ENCODE measurements at regions of chr4 and their contacts with region 1.

Region 1: DNA sequence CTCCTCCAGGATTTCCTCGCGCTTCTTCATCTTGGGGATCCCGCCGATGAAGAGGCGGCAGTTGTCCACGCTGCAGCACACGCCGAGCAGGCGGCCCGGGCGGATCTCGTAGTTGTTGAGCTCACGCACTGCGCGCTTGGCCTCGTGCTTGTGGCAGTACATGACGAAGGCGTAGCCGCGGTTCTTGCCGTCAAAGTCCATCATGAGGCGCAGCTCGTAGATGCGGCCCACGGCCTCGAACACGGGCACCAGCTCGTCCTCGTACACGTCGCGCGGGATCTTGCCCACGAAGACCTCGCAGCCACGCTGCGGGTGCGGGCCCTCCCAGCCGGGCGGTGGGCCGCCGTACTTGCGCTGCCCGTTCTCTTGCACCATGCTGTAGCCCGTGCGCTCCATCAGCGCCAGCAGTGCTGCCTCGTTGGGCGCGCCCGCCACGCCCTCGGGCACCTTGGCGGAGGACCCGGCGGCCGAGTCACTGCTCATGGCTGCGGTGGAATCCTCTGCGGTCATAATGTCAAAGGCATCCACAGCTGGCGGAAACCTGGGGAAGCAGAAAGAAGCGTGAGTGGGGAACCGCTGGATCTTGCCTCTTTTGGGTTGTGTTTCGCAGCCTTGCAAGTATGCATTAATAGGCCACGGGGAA is 103.4 kb downstream of the CHRNA9 start:
- DNase-seq: no peak
- H3K4me3 Mint-ChIP-seq: no peak overlapping the region
- H3K27ac Mint-ChIP-seq: no peak overlapping the region
- H3K4me1 Mint-ChIP-seq: peaks cover 15% of the 10 kb centered on the region
- H3K27me3 Mint-ChIP-seq: peaks cover 1% of the 10 kb centered on the region

Region 2: GRCh38 chr4:40275065-40275730 is 163.3 kb before region 1 on chr4:
- CTCF ChIA-PET with region 1: no interaction called
- POLR2A ChIA-PET with region 1: no interaction called
- intact Hi-C with region 1: no loop called
- DNase-seq: no peak
- H3K4me3 Mint-ChIP-seq: no peak overlapping the region
- H3K27ac Mint-ChIP-seq: no peak overlapping the region
- H3K4me1 Mint-ChIP-seq: peaks cover 10% of the 10 kb centered on the region
- H3K27me3 Mint-ChIP-seq: no peaks in the 10 kb centered on the region

Region 3: DNA sequence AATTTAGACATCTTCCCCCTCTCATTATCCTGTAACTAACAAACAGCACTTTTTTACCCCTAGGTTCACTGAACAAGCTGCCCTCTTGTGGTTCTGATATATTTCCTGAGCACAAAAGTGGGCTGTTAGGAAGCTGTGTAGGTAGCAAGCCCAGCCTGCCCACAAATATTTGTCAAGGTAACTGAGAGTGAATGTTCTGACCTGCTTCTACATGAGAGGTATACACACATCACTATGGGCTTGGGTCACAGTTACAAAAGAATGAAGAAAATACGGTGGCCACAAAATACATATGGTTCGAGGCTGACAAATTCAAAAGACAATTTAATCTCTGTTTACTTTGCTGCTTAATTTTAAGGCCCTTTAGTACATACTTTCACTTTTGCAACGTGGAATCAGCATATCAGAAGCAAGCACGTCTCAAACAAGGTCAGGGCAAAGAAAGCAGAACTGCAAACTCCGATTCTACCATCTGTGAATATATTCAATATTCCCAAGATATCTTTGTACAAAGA is 112.5 kb after region 1 on chr4:
- CTCF ChIA-PET with region 1: no interaction called
- POLR2A ChIA-PET with region 1: no interaction called
- intact Hi-C with region 1: loop called (anchors 10 kb)
- DNase-seq: no peak
- H3K4me3 Mint-ChIP-seq: peak overlapping the region; percentile 49
- H3K27ac Mint-ChIP-seq: no peak overlapping the region
- H3K4me1 Mint-ChIP-seq: peaks cover 22% of the 10 kb centered on the region
- H3K27me3 Mint-ChIP-seq: no peaks in the 10 kb centered on the region

Measured in activated CD4-positive, alpha-beta memory T cell treated with anti-CD3 and anti-CD28 coated beads for 36 hours (primary cell).